ENCODE measurements at regions of chr9 and their contacts with region 1.

Region 1: DNA sequence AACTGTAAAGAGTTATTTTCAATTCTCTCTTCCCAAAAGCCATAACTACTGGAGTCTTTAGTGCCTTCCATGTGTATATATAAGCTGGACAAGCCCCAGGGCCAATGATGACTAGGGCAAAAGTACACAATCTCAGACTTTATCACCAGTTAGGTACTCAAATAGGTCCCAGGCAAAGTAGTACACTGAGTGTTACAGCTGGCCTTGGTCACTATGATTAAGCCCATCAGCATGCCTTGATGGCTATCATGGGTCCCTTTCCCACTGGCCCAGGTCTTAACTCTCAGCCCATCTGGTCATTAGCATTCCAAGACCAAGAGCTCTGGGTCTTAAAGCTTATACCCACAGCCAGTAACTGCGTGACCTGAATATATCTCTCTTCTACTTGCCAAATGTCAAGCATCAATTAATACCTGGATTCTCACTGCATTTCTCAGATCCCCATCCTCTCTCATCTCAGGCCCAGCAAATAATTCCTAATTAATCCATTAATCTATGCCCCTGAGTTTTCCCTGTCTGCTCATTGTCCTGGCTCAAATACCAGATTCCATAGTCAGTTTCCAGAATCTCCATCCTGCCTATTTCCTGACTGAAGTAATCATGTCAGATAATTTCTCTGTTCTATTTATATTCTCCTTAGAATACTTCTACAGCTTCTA is 62.3 kb downstream of the NR6A1 start:
- DNase-seq: no peak
- ATAC-seq: no peak
- H3K4me3 Mint-ChIP-seq: no peak overlapping the region
- H3K27ac Mint-ChIP-seq: no peak overlapping the region
- H3K4me1 Mint-ChIP-seq: no peaks in the 10 kb centered on the region
- H3K27me3 Mint-ChIP-seq: peaks cover 14% of the 10 kb centered on the region

Region 2: GRCh38 chr9:124450241-124450924 is 258.4 kb before region 1 on chr9 and contains the start of gene ADGRD2:
- CTCF ChIA-PET with region 1: no interaction called
- POLR2A ChIA-PET with region 1: no interaction called
- intact Hi-C with region 1: no loop called
- DNase-seq: peak; percentile 35
- ATAC-seq: peak; percentile 18
- H3K4me3 Mint-ChIP-seq: no peak within 1 kb of the TSS
- H3K27ac Mint-ChIP-seq: no peak within 1 kb of the TSS
- H3K4me1 Mint-ChIP-seq: no peaks in the 10 kb centered on the region
- H3K27me3 Mint-ChIP-seq: peaks cover 29% of the 10 kb centered on the region
- total RNA-seq, gene ADGRD2: not detected

Region 3: DNA sequence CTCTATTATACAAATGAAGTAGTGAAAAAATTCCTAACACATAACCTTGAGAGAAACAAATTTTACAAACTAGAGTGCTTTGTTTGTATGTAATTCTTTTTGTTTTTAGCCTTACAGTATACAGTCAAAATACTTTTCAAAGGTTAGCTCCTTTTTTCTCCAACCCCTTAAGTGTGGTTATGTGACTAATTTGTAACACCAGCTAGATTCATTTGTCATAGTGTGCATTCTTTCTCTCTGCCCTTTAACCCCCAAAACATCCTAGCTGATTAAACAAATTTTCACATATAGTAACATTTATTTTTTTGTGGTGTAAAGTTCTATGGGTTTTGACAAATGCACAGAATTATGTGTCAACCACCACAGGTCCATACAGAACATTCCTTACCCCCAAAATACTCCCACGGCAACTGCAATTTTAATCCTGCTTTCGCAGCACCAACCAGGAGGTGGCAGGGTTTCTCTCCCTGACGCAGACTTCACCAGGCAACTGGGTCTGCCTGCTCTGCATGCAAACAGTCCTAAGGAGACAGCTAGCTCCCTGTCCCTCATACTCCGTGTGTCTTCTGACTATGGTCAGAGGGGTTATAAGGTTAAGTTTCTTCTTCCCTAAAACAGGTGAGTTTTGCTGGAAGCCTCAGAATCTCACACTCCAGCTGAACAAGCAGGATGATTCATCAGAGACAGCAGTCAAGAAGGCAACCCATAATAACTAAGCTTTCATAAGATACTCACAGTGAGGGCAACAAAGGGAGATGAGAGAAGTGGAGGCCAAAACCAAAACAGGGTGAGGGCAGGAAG is 157.1 kb before region 1 on chr9:
- CTCF ChIA-PET with region 1: interaction called, 4 read pairs
- POLR2A ChIA-PET with region 1: no interaction called
- intact Hi-C with region 1: loop called (anchors 1 to 5 kb)
- DNase-seq: peak; percentile 63
- ATAC-seq: peak; percentile 91
- H3K4me3 Mint-ChIP-seq: no peak overlapping the region
- H3K27ac Mint-ChIP-seq: no peak overlapping the region
- H3K4me1 Mint-ChIP-seq: peaks cover 8% of the 10 kb centered on the region
- H3K27me3 Mint-ChIP-seq: peaks cover 4% of the 10 kb centered on the region

Region 4: DNA sequence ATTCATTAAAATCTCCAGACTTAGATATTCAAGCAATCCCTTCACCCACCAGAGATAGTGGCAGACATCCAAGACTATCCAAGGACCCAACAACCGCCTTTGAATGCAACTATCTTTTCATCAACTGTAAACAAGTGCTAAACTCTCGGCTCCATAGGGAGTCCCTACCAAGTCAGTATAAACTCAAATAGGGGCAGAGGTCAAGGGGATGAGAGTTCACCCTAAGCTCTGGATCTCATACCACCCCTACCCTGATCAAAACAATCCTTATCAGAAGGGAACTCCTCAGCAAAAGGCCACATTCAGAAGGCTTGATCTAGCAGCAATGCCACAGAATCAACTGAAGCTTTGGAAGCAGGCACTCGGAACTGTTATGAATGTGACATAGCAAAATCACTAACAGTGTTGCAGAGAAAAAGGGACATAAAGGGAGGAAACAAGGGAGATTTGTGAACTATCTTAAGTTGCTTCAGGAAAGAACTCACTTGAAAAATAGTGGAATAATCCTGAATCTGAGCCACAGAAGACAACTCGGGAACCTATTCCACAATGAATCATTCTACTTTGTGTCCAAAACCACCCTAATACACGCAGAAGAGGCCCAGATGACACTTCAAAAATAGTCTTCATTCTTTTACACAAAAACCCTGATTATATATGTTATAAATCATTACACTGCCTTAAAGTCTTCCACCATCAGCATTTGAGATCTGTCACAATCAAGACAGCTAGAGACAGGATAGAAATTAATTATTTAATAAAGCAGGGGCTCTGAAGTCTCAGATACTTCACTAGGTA is 12.5 kb after region 1 on chr9:
- CTCF ChIA-PET with region 1: interaction called, 11 read pairs
- POLR2A ChIA-PET with region 1: no interaction called
- intact Hi-C with region 1: no loop called
- DNase-seq: no peak
- ATAC-seq: no peak
- H3K4me3 Mint-ChIP-seq: no peak overlapping the region
- H3K27ac Mint-ChIP-seq: no peak overlapping the region
- H3K4me1 Mint-ChIP-seq: peaks cover 12% of the 10 kb centered on the region
- H3K27me3 Mint-ChIP-seq: peaks cover 8% of the 10 kb centered on the region

Region 5: DNA sequence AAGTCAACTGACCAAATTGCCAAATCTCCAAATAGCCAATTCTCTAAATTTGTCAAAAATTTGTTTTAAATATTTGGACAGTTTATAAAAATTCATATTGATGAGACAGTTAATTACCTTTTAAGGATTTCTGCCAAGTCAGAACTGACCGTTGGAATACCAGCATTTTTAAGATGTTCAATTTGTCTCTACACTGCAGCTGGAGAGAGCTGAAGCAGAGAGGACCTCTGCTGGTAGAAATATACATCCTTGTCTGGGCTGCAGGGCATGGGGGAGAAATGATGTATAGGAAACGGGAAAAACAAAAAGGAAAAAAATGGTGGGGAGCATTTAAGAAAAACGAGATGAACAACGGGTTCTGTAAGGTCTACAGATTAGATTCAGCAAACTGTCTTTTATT is 45.5 kb after region 1 on chr9:
- CTCF ChIA-PET with region 1: interaction called, 5 read pairs
- POLR2A ChIA-PET with region 1: no interaction called
- intact Hi-C with region 1: loop called in 1 of 2 experiments (anchors 2 kb)
- DNase-seq: no peak
- ATAC-seq: no peak
- H3K4me3 Mint-ChIP-seq: no peak overlapping the region
- H3K27ac Mint-ChIP-seq: no peak overlapping the region
- H3K4me1 Mint-ChIP-seq: peaks cover 16% of the 10 kb centered on the region
- H3K27me3 Mint-ChIP-seq: peaks cover 48% of the 10 kb centered on the region

Region 6: GRCh38 chr9:124764774-124765438 is 56.1 kb after region 1 on chr9:
- CTCF ChIA-PET with region 1: interaction called, 3 read pairs
- POLR2A ChIA-PET with region 1: no interaction called
- intact Hi-C with region 1: loop called (anchors 2 to 5 kb)
- DNase-seq: no peak
- ATAC-seq: no peak
- H3K4me3 Mint-ChIP-seq: no peak overlapping the region
- H3K27ac Mint-ChIP-seq: no peak overlapping the region
- H3K4me1 Mint-ChIP-seq: peaks cover 10% of the 10 kb centered on the region
- H3K27me3 Mint-ChIP-seq: peaks cover 60% of the 10 kb centered on the region

Region 7: DNA sequence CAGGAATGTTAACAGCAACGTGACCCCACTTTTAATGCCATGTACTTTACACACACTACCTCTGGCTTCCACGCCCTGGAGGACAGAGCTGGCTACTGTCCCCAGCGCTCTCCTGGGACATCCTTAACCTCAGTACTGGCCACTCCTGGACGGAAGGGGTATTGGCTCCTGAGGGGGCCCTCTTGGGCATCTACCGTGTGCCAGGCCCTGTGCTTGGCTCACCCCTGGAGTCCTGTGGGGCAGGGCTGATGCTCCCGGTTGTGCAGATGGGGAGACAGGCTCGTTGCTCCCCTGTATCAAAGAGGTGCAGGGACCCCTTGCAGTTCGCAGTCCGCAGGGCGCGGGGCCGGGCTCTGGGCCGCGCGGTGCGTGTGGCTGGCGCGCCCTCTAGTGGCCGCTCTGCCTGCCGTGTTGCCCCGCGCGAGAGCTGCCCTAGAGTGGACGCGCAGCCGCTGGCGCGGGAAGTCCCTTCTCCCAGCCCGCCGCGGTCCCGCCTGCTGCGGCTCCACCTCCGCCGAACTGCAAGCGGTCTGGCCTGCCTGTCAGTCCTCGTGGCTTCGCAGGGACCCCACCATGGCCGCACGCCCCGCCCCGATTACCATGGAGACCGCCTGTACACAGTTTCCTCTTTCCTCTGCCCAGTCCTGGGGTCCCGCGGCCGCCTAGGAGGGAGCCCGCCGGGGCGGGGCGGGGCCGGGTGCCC is 144.2 kb after region 1 on chr9 and contains the start of gene WDR38:
- CTCF ChIA-PET with region 1: interaction called, 8 read pairs
- POLR2A ChIA-PET with region 1: no interaction called
- intact Hi-C with region 1: loop called in 1 of 2 experiments (anchors 1 kb)
- DNase-seq: peak; percentile 85
- ATAC-seq: peak; percentile 88
- H3K4me3 Mint-ChIP-seq: peak within 1 kb of the TSS; percentile 46
- H3K27ac Mint-ChIP-seq: no peak within 1 kb of the TSS
- H3K4me1 Mint-ChIP-seq: peaks cover 16% of the 10 kb centered on the region
- H3K27me3 Mint-ChIP-seq: peaks cover 10% of the 10 kb centered on the region
- total RNA-seq, gene WDR38: not detected

Region 8: DNA sequence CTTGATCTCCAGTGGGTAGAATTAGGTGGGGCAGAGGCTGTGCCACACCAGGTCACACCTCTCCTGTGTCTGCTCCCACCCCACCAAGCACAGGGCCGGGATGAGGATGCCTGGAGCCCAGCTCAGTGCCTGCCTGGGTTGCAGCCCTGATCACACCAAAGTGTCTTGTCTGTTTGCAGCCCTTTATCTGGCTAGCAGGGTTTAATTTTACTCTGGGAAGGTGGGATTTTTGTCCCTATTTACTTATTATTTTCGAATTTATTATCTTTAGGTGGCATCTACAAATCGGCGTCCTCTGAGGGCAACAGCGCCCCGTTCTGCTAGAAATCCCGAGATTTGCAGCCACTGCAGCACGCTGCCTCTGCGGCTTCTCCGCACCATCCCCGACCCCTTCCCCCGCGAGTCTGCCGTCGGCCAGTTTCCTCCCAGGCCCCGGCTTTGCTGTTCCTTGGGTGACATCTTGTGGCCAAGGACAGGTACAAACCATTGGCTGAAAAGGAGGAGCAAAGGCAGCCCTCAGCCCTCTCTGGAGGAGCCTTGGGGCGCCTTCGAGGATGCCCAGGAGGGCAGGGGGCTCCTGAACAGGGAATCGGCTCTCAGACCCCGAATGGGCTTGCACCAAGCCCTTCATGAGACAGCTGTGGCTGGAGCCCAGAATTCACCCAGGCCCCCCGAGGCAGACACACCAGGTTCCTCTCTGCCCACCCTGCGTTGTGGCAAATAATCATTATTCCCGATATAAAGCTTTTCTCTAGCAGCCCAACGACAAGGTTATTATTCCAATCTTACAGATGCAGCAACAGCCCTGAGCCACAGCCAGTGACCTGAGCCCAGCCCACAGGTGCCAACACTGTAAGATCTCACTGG is 665.9 kb after region 1 on chr9:
- CTCF ChIA-PET with region 1: no interaction called
- POLR2A ChIA-PET with region 1: no interaction called
- intact Hi-C with region 1: loop called in 1 of 2 experiments (anchors 5 kb)
- DNase-seq: peak; percentile 85
- ATAC-seq: peak; percentile 97
- H3K4me3 Mint-ChIP-seq: peak overlapping the region; percentile 26
- H3K27ac Mint-ChIP-seq: no peak overlapping the region
- H3K4me1 Mint-ChIP-seq: peaks cover 2% of the 10 kb centered on the region
- H3K27me3 Mint-ChIP-seq: no peaks in the 10 kb centered on the region